ENCODE measurements at regions of chr3 and their contacts with region 1.

Region 1: DNA sequence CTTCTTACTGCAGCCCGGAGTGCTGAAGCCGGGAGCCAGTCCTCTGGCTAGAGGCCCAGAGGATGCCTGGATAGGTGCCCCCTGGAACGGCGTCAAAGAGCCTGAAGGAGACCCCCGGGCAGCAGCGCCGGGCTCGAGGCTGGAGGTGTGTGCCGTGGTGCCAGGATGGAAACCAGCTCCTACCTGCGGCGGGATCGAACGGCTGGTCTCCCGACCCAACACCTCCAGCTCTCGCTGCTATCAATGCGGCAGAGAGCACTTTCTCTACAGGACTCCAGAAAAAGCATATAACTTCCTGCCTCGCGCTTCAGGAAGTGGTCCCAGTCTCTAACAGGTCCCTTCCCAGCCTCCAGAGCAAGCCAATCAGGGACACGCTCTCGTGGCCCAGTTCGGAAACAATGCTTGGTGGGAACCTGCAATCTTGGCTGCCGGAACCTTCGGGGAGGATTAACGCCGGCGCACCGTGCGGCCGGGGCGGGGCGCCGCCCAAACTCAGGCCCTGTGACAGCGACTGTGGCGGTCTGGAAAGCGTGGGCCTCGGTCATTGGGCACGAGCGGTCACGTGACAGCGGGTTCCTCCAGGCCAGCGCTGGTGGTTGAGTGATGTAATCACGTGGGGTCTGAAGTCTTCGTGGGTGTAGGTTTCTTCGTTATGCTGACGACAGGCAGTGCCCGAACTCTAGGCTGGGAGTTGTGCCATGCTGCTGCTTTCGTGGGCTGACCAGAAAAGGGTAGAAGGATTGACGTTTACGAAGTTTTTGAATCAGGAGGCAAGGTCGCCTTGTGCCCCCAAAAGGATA is at the start of gene SLC33A1:
- DNase-seq: peak; percentile 100
- H3K4me3 ChIP-seq: peak within 1 kb of the TSS; percentile 77 to 94 (median 93)
- H3K27ac ChIP-seq: peak within 1 kb of the TSS; percentile 92
- H3K4me1 ChIP-seq: peaks cover 13% of the 10 kb centered on the region
- H3K27me3 ChIP-seq: no peaks in the 10 kb centered on the region
- CTCF ChIP-seq: no peak
- total RNA-seq, gene SLC33A1: 35.0 to 52.7 TPM

Region 2: DNA sequence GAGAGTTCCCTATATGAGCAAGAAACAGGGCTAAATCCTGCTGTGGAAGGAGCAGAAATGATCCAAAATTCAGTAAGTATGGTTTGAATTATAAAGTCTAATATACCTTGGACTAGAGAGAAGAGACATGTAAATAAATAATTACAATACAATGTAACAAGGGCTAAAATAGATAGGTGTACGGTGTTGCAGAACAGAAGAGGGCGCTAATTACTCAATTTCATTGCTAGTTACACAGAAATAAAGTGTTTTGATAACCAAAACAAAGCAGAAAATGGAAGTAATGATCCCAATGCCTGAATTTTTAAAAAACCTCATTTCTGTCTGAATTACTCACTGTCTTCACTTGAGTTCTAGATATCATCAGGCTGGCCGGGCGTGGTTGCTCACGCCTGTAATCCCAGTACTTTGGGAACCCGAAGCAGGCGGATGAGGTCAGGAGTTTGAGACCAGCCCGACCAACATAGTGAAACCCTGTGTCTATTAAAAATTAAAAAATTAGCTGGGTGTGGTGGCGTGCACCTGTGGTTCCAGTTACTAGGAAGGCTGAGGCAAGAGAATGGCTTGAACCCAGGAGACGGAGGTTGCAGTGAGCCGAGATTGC is 101.2 kb before region 1 on chr3:
- CTCF ChIA-PET with region 1: interaction called, 7 read pairs
- dilution Hi-C with region 1: no loop called
- in situ Hi-C with region 1: no loop called
- intact Hi-C with region 1: loop called (anchors 2 kb)
- DNase-seq: no peak
- H3K4me3 ChIP-seq: no peak overlapping the region
- H3K27ac ChIP-seq: no peak overlapping the region
- H3K4me1 ChIP-seq: no peaks in the 10 kb centered on the region
- H3K27me3 ChIP-seq: no peaks in the 10 kb centered on the region
- CTCF ChIP-seq: peak; percentile 48 to 54

Region 3: GRCh38 chr3:155805802-155806618 is 48.3 kb before region 1 on chr3 and contains the start of gene C3orf33:
- CTCF ChIA-PET with region 1: no interaction called
- dilution Hi-C with region 1: no loop called
- in situ Hi-C with region 1: no loop called
- intact Hi-C with region 1: loop called (anchors 5 kb)
- DNase-seq: peak; percentile 57
- H3K4me3 ChIP-seq: peak within 1 kb of the TSS; percentile 82 to 94 (median 85)
- H3K27ac ChIP-seq: no peak within 1 kb of the TSS
- H3K4me1 ChIP-seq: no peaks in the 10 kb centered on the region
- H3K27me3 ChIP-seq: no peaks in the 10 kb centered on the region
- CTCF ChIP-seq: peak; percentile 64 to 82
- total RNA-seq, gene C3orf33: 1.9 to 3.0 TPM

Region 4: DNA sequence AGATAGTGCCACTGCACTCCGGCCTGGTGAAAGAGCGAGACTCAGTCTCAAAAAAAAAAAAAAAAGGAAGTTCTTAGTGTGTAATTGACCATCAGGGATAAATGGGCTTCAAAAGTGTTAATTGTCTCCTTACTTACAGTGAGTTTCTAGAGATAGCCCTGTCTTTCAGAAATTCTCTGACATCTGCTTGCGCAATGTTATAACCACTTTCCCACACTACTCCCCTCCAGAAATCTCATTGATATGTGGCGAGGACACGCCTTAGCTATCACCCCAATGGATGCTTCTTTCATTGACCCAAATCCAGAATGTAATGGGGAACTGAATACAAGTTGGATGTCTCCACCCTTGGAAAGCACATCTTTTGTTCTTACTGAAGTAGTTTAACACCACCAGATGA is 87.0 kb after region 1 on chr3:
- CTCF ChIA-PET with region 1: no interaction called
- dilution Hi-C with region 1: loop called (anchors 5 kb)
- in situ Hi-C with region 1: no loop called
- intact Hi-C with region 1: no loop called
- DNase-seq: no peak
- H3K4me3 ChIP-seq: no peak overlapping the region
- H3K27ac ChIP-seq: no peak overlapping the region
- H3K4me1 ChIP-seq: peaks cover 5% of the 10 kb centered on the region
- H3K27me3 ChIP-seq: no peaks in the 10 kb centered on the region
- CTCF ChIP-seq: no peak

Measured in mammary epithelial cell (primary cell).